CD14-positive monocyte (primary cell): ENCODE measurements at regions of chr7 and their contacts with region 1.

Region 1: DNA sequence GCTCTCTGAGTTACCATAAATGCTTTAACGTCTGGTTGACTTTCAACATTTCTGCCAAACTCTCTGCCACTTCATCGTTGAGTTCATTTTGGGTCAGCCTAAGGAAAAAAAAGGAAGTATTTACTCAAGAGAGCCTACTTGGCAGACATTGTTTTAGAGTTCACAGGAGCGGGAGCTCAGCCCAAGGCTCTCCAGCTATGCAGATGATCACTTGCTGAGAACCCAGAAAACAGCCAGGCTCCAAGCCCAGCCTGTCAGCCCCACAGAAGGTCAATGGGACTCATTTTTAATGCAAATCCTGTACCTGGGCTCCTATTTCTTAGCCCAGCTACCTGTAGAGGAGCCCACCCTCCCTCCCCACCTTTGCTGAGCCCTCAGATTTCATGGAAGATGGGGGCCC is 45.5 kb downstream of the NOD1 start:
- DNase-seq: peak; percentile 54 to 71 (median 65)
- H3K4me3 ChIP-seq: peak overlapping the region in 1 of 3 experiments; percentile 49
- H3K4me3 Mint-ChIP-seq: peak overlapping the region; percentile 34 to 60
- H3K27ac ChIP-seq: peak overlapping the region; percentile 62 to 90
- H3K27ac Mint-ChIP-seq: peak overlapping the region; percentile 79 to 95 (median 92)
- H3K4me1 ChIP-seq: peaks cover 97 to 100% of the 10 kb centered on the region in 2 donors
- H3K4me1 Mint-ChIP-seq: peaks cover 99% of the 10 kb centered on the region
- H3K27me3 ChIP-seq: no peaks in the 10 kb centered on the region
- H3K27me3 Mint-ChIP-seq: peaks cover 0 to 3% (median 0%) of the 10 kb centered on the region in 3 donors
- CTCF ChIP-seq: no peak

Region 2: DNA sequence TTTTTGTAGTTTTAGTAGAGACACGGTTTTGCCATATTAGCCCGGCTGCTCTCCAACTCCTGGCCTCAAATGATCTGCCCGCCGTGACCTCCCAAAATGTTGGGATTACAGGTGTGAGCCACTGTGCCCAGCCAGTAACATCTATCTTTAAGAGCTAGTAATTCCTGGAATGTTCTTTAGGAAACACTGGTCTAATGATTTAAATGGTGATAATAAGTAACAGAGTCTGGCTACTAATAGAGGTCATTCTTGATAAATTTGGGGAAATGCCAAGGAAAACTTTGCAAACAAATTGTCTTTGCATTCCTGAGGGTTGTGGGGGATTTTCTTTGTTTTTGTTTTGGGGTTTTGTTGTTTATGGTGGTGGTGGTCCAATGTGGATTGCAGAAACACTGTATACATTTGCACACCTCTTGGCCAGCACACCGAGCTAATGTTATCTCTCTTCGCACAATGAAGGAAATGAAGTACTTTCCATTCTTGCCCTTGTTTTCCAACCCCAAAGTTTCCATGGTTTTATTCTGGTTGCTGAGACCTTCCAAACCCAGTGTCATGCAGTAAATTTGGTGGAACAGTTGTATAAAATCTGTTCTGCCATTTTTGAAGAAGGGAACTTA is 678.1 kb before region 1 on chr7:
- intact Hi-C with region 1: no loop called
- DNase-seq: no peak
- H3K4me3 ChIP-seq: no peak overlapping the region
- H3K4me3 Mint-ChIP-seq: no peak overlapping the region
- H3K27ac ChIP-seq: no peak overlapping the region
- H3K27ac Mint-ChIP-seq: no peak overlapping the region
- H3K4me1 ChIP-seq: no peaks in the 10 kb centered on the region
- H3K4me1 Mint-ChIP-seq: no peaks in the 10 kb centered on the region
- H3K27me3 ChIP-seq: no peaks in the 10 kb centered on the region
- H3K27me3 Mint-ChIP-seq: peaks cover 0 to 4% (median 2%) of the 10 kb centered on the region in 3 donors
- CTCF ChIP-seq: no peak

Region 3: DNA sequence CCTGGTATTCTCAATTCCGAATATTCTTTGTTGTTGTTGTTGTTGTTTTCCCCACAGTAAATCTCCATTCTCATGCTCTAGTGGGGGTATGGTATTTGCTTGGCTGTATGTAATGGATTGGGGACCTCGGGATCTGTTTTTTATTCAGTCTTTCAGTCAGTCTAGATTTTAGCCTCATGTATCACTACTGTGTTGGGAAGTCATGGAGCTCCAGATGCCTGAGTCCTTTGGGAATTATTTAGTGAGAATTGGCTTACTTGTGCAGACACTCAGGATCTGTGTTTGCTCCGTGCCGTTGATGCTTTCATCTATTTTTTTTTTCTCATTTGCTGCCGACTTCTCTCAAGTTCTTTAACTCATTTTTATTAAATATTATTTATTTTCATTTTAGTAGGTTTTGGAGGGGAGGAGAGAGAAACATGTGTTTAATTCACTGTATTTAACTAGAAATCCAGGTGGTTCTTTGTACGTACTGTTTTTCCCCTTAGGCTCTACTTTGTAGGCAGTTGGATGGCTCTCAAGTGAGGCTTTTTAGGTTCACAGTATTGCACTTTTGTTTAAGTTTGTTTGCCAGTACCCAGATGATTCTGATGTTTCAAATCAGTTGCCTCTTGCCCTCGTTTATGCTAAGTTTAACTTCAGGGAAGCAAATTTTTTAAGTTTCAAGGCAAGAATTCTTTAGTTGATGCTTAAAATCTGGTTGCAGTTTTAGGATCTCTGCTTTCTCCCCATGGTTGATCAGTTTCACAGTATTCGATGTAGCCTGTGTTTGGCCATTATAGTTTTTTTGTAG is 111.8 kb before region 1 on chr7:
- intact Hi-C with region 1: no loop called
- DNase-seq: no peak
- H3K4me3 ChIP-seq: peak overlapping the region; percentile 27 to 70 (median 56)
- H3K4me3 Mint-ChIP-seq: peak overlapping the region; percentile 72 to 85
- H3K27ac ChIP-seq: peak overlapping the region in 1 of 2 donors; percentile 90
- H3K27ac Mint-ChIP-seq: peak overlapping the region; percentile 84 to 96 (median 89)
- H3K4me1 ChIP-seq: peaks cover 36 to 61% of the 10 kb centered on the region in 2 donors
- H3K4me1 Mint-ChIP-seq: peaks cover 63% of the 10 kb centered on the region
- H3K27me3 ChIP-seq: no peaks in the 10 kb centered on the region
- H3K27me3 Mint-ChIP-seq: no peaks in the 10 kb centered on the region
- CTCF ChIP-seq: no peak

Region 4: DNA sequence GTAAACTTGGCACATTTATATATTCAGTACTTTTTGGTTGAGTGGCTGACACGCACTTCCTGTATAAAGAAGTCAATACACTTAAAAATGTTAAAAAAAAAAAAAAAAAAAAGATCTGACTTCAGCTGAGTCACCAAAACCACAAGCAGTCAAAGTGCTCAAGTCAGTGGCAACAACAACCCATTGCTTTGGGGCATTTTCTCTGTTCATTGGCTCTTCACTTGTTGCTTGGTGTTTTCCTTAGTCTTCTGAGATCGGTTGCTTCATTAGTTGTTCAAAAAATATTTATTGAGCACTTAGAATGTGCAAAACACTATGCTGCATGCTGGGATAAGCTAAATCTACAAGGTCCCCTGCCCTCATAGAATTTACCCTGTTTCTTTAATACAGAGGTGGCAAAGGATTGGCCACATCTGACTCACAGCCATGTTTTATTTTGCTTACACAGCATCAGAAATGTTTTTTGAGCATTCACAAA is 85.0 kb before region 1 on chr7:
- intact Hi-C with region 1: loop called (anchors 5 to 10 kb)
- DNase-seq: peak; percentile 76 to 90 (median 83)
- H3K4me3 ChIP-seq: peak overlapping the region in 1 of 3 experiments; percentile 48
- H3K4me3 Mint-ChIP-seq: peak overlapping the region; percentile 4 to 74
- H3K27ac ChIP-seq: peak overlapping the region in 1 of 2 donors; percentile 89
- H3K27ac Mint-ChIP-seq: peak overlapping the region; percentile 83 to 93 (median 90)
- H3K4me1 ChIP-seq: peaks cover 60 to 82% of the 10 kb centered on the region in 2 donors
- H3K4me1 Mint-ChIP-seq: peaks cover 69% of the 10 kb centered on the region
- H3K27me3 ChIP-seq: no peaks in the 10 kb centered on the region
- H3K27me3 Mint-ChIP-seq: no peaks in the 10 kb centered on the region
- CTCF ChIP-seq: no peak

Region 5: DNA sequence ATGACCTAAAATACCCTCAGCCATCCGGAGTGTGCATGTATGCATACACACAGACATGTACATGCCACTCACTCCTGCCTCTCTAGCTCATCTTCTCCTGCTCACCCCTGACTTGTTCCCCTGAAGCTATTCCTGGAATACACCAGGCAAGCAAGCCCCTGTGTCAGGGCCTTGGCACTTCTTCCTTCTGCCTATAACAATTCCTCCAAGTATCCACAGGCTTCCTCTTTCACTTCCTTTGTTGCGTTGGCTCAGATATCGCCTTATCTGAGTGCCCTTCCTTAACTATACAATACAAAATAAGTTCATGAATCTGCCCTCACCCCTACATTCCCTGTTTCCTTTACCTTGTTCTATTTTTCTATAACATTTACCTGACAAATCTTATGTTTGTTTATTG is 43.3 kb before region 1 on chr7:
- intact Hi-C with region 1: no loop called
- DNase-seq: peak; percentile 11 to 37 (median 27)
- H3K4me3 ChIP-seq: no peak overlapping the region
- H3K4me3 Mint-ChIP-seq: no peak overlapping the region
- H3K27ac ChIP-seq: no peak overlapping the region
- H3K27ac Mint-ChIP-seq: peak overlapping the region in 3 of 7 donors; percentile 47 to 75 (median 50)
- H3K4me1 ChIP-seq: peaks cover 2 to 6% of the 10 kb centered on the region in 2 donors
- H3K4me1 Mint-ChIP-seq: peaks cover 9% of the 10 kb centered on the region
- H3K27me3 ChIP-seq: no peaks in the 10 kb centered on the region
- H3K27me3 Mint-ChIP-seq: peaks cover 0 to 2% (median 0%) of the 10 kb centered on the region in 3 donors
- CTCF ChIP-seq: no peak

Region 6: DNA sequence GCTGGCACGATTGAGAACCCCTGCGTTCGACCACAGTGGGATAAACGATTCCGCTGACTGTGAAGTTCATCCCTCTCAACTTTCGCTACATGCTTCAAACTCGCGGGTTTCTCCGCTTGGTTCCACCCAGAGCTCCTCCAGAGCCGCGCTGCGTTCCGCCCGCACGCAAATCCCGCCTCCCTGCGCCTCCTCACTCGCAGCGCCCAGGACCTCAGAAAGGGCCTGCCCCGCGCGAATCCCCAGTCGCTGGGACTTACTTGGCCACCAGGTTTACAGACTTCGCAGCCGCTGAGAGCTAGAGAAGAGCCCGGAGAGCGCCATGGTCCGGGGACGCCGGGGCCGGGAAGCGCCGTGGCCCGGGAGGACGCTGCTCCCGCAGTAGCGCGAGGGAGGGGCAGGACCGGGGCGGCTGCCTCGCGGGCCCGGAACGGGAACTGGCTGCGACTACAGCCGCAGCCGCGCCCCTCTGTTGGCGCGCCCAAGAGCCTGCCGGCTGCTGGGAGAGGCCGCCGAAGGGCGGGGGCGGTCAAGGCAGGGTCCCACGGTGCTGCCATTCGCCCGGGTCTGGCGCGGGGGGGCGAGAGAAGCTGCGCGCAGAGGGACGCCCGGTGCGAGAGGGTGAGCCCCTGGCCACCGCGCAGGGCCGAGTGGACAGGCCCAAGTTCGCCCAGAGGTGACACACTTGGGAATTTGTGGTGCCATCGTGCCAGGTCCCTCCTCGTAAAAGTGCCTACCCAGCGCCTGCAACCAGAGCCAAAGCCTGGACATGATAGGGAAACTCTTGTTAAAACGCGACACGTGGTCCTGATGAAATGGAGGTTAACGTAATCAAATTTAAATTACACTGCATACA is 45.5 kb after region 1 on chr7 and contains the start of gene NOD1:
- intact Hi-C with region 1: loop called in 1 of 2 experiments (anchors 5 kb)
- DNase-seq: peak; percentile 51 to 61 (median 55)
- H3K4me3 ChIP-seq: peak within 1 kb of the TSS; percentile 47 to 89 (median 79)
- H3K4me3 Mint-ChIP-seq: peak within 1 kb of the TSS; percentile 95 to 96
- H3K27ac ChIP-seq: peak within 1 kb of the TSS; percentile 72 to 92
- H3K27ac Mint-ChIP-seq: peak within 1 kb of the TSS; percentile 78 to 93 (median 87)
- H3K4me1 ChIP-seq: peaks cover 29 to 37% of the 10 kb centered on the region in 2 donors
- H3K4me1 Mint-ChIP-seq: peaks cover 44% of the 10 kb centered on the region
- H3K27me3 ChIP-seq: no peaks in the 10 kb centered on the region
- H3K27me3 Mint-ChIP-seq: no peaks in the 10 kb centered on the region
- CTCF ChIP-seq: no peak
- polyA plus RNA-seq, gene NOD1: 2.8 to 15.0 (median 4.6) TPM